Transverse colon (tissue), 4 donors: ENCODE measurements at regions of chr6 and their contacts with region 1.

Region 1: GRCh38 chr6:18990059-18990978 is 603.2 kb downstream of the RNF144B start:
- DNase-seq: peak; percentile 69
- H3K4me3 ChIP-seq: no peak overlapping the region
- H3K27ac ChIP-seq: no peak overlapping the region
- H3K4me1 ChIP-seq: peaks cover 0 to 7% (median 0%) of the 10 kb centered on the region in 4 donors
- H3K27me3 ChIP-seq: no peaks in the 10 kb centered on the region
- CTCF ChIP-seq: peak; percentile 17 to 60 (median 41)
- EP300 ChIP-seq: no peak
- POLR2A ChIP-seq: no peak

Region 2: GRCh38 chr6:18477301-18477941 is 512.9 kb before region 1 on chr6:
- in situ Hi-C with region 1: no loop called
- intact Hi-C with region 1: loop called (anchors 5 kb)
- DNase-seq: no peak
- H3K4me3 ChIP-seq: no peak overlapping the region
- H3K27ac ChIP-seq: no peak overlapping the region
- H3K4me1 ChIP-seq: no peaks in the 10 kb centered on the region
- H3K27me3 ChIP-seq: no peaks in the 10 kb centered on the region
- CTCF ChIP-seq: no peak
- EP300 ChIP-seq: no peak
- POLR2A ChIP-seq: no peak

Region 3: DNA sequence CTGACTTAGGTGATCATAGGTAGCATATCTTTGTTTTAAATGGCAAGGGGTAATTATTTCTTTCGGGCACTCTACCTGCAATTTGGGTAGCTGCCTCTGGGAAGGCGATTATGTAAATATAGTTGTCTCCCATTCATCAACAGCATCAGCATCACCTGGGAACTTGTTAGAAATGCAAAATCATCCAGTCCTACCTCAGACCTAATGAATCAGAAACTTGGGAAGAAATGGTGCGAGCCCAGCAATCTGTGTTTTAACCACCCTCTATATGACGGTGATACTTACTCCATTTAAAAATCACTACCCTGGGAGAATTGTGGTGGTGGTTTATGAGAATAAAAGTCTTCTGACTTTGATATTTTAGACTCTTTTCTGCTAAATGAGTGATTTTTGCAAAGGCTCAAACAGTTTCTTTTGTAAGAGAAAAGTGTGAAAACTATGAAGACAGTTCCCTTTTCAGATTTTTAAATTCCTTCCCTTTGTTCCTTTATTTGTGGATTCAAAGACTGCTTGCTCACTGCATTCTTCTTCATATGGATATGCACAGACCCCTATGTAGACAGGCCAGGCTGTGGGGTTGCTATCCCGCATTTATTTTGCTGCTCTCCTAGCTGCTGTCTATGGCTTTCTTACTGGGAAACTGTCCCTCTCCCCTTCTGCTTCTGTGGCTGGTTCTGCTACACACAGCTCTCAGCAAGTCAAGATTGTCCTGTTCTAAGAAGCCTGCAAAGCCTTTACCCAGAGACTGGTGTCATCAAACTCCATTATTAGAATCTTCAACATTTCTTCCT is 237.8 kb before region 1 on chr6:
- in situ Hi-C with region 1: no loop called
- intact Hi-C with region 1: no loop called
- DNase-seq: no peak
- H3K4me3 ChIP-seq: no peak overlapping the region
- H3K27ac ChIP-seq: no peak overlapping the region
- H3K4me1 ChIP-seq: peaks cover 0 to 4% (median 2%) of the 10 kb centered on the region in 4 donors
- H3K27me3 ChIP-seq: no peaks in the 10 kb centered on the region
- CTCF ChIP-seq: no peak
- EP300 ChIP-seq: no peak
- POLR2A ChIP-seq: no peak

Region 4: DNA sequence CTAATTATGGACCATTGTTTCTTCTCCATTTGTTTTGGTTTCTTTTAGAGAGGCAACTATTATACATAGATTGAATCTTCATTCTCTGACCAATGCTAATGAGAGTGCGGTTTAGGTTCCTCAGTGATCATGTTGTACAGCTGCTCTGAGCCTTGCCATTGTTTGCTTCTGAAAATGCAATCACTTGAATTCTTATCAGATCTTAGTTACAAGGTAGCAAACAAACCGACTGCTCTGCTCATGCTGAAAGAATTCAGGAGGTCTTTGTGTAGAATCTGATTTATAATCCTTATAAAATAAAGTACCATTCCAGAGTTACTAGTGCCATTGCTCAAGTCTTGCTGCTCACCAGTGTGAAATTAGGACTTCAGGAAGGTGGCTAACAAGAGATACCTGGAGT is 277.8 kb after region 1 on chr6:
- in situ Hi-C with region 1: no loop called
- intact Hi-C with region 1: no loop called
- DNase-seq: no peak
- H3K4me3 ChIP-seq: no peak overlapping the region
- H3K27ac ChIP-seq: no peak overlapping the region
- H3K4me1 ChIP-seq: no peaks in the 10 kb centered on the region
- H3K27me3 ChIP-seq: no peaks in the 10 kb centered on the region
- CTCF ChIP-seq: no peak
- EP300 ChIP-seq: no peak
- POLR2A ChIP-seq: no peak

Region 5: DNA sequence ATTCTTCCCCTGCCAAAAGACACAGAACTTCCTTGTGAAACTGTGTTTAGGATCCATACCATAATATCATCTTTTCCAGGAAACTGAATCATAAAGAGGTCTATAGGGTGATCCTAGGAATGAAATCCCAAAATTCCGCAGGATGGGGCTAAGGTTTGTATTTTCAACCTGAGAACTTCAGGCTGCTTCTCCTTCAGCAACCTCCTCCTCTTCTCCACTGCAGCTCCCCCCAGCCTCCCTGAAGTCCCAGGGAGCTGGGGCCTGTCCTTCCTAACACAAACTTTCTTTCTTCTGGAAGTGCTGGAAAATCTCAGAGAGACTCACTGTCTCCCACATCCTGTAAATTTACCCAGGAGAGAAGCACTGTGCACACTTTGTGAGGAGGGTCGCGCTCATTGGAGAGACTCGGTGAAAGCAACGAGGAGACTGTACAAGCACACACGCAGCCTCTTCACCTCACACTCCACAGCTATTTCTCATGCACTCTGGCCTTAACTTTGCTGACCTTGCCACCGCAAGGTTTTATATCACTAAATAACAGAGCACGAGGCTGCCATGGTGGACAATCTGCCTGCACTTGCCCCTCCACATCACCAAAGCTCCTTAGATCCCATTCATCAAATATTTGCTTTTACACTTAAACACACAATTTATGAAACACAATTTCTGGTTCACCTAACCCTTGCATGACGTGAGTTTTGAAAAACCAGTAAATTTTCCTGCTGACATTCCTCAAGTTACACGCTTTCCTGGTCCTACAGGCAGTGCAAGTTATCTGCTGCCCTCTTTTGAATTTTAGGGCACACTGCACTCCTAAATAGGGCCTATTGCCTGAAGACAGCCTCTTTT is 861.1 kb after region 1 on chr6:
- in situ Hi-C with region 1: loop called in 1 of 4 experiments (anchors 25 kb)
- intact Hi-C with region 1: no loop called
- DNase-seq: peak; percentile 14
- H3K4me3 ChIP-seq: no peak overlapping the region
- H3K27ac ChIP-seq: peak overlapping the region in 3 of 4 donors; percentile 3 to 48 (median 35)
- H3K4me1 ChIP-seq: peaks cover 0 to 8% (median 5%) of the 10 kb centered on the region in 4 donors
- H3K27me3 ChIP-seq: no peaks in the 10 kb centered on the region
- CTCF ChIP-seq: peak; percentile 73 to 86 (median 80)
- EP300 ChIP-seq: no peak
- POLR2A ChIP-seq: no peak

Region 6: DNA sequence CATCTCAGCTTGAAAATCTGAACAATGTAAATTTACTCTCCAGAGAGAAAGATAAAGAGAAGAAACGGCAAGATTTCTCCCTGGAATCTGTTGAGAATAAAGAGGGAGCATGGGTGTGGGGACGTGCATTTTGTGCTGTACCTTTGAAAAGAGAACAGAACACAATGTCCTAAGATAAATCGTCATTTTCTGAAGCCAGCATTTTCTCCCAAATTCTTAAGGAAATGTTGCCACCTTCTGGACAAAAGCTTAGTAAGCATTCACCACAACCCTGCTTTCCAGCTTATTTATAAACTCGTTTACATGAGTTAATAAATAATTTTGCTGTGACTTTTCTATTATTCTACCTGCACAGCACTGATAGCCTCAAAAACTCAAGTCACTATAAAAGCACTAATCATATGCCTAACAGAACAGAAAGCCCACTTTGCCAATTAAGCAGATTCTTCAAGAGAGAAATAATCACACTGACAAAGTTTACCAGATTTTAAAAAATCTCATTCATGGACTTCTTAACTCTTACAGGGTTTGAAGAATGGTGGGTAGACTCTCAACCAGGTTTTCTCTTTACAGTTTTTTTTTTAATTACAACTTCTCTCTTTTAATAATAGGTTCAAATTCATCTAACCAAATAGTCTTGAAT is 1066.2 kb after region 1 on chr6:
- in situ Hi-C with region 1: loop called in 1 of 4 experiments (anchors 25 kb)
- intact Hi-C with region 1: no loop called
- DNase-seq: no peak
- H3K4me3 ChIP-seq: no peak overlapping the region
- H3K27ac ChIP-seq: no peak overlapping the region
- H3K4me1 ChIP-seq: no peaks in the 10 kb centered on the region
- H3K27me3 ChIP-seq: no peaks in the 10 kb centered on the region
- CTCF ChIP-seq: peak; percentile 20 to 42 (median 36)
- EP300 ChIP-seq: no peak
- POLR2A ChIP-seq: no peak